Activated CD4-positive, alpha-beta memory T cell treated with anti-CD3 and anti-CD28 coated beads, Interleukin-2, amount 10 ng/mL, durations not matched to agents 7 days and 5 days (primary cell): ENCODE measurements at regions of chr13 and their contacts with region 1.

Region 1: DNA sequence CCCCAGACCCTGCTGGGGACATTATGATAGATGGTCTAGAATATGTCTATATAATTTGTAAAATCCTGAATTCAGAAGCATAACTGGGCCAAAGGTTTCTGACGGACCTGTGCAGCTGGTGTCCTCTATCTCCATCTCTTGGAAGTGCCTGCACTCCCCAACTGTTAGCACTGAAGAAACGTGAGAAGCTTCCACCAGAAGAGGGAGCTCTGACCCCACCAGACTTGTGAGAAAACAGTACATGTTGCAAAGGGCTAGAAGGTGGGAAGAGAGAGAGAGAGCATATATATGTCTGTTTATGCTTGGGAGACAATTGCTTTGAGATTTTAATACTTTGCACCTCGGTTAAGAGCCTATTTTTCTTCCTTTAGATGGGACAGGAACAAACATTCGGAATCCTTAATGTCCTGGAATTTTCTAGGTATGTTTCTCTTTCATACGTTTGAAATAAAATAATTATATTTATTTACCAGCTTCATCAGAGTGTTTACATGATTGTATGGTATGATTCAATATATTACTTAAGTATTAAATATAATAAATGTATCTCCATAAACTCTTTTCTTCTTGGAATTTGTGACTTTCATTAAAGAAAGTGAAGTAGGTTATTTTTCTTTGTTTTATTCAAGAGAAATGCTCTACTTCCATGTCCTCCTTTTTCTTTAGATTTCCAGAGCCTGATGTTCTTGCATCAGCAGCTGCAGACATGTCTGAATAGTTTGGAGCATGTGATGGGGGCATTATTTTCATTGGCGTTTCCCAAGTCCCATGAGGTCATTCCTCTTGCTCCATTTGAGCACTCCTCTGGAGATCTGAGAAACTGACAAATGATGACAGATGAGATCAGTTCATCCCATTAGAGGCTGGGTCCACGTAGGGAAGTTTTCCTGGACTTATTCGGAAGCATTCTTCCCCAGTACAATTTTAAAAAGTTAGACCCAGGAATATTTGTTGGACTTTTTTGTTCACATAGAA is 202.9 kb downstream of the ATP8A2 start:
- DNase-seq: peak; percentile 76
- H3K4me3 Mint-ChIP-seq: no peak overlapping the region
- H3K27ac Mint-ChIP-seq: no peak overlapping the region
- H3K4me1 Mint-ChIP-seq: peaks cover 6% of the 10 kb centered on the region
- H3K27me3 Mint-ChIP-seq: peaks cover 38% of the 10 kb centered on the region

Region 2: DNA sequence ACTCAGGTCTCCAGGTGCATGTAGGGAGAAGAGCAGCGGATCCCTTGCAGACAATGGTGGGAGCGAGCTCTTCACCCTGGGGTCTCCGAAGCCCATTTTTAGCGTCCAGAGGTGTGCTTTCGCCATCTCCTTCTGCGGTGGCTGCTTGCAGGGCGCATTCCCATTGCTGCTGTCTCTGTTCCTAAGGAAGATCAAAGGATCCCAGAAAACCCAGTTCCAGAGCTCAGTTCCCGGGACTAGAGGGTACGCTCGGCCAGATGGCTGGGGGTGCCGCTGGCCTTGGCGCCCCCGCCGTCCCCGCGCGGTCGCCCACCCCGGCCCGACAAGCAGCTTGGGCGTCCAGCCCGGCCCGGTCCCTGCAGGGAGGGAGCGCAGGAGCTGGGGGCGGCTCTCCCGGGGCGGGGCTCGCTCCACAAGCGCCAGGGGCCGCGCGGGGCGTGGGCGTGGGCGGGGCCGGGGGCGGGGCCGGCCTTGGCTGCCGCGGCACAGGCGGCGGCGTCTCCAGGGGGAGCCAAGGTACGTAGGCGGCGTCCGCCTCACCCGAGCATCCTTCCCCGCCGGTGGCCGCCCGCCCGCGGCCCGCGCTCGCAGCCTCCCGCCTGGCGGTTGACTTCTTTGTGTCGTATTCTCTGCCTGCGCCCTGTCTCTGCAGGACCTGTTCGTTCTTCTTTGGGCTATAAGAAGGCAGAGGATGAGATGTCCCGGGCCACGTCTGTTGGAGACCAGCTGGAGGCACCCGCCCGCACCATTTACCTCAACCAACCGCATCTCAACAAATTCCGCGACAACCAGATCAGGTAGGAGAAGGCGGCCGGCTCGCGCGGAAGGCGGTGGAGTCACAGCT is 106.2 kb before region 1 on chr13:
- CTCF ChIA-PET with region 1: no interaction called
- POLR2A ChIA-PET with region 1: no interaction called
- DNase-seq: peak; percentile 18
- H3K4me3 Mint-ChIP-seq: no peak overlapping the region
- H3K27ac Mint-ChIP-seq: no peak overlapping the region
- H3K4me1 Mint-ChIP-seq: peaks cover 2% of the 10 kb centered on the region
- H3K27me3 Mint-ChIP-seq: peaks cover 39% of the 10 kb centered on the region

Region 3: GRCh38 chr13:25561812-25562211 is 12.9 kb before region 1 on chr13:
- CTCF ChIA-PET with region 1: no interaction called
- POLR2A ChIA-PET with region 1: no interaction called
- DNase-seq: no peak
- H3K4me3 Mint-ChIP-seq: no peak overlapping the region
- H3K27ac Mint-ChIP-seq: no peak overlapping the region
- H3K4me1 Mint-ChIP-seq: no peaks in the 10 kb centered on the region
- H3K27me3 Mint-ChIP-seq: peaks cover 20% of the 10 kb centered on the region

Region 4: DNA sequence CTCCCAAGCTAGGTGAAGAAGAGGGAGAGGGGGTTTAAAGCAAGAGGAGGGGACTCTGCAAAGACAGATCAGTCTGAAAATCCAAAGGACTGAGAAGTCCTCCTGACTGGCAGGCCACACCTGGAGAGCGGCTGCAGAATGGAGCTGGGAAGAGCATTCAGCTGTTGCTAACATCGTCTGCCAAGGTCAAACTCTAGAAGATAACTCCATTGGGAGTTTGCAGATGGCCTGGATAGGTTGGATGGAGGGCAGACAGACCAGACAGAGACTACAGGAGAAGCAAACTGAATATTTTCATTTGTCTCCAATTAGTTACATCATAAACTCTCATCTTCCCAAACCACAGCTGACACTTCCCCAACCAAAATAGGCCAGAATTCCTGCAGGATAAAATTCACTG is 497.0 kb after region 1 on chr13:
- CTCF ChIA-PET with region 1: interaction called, 10 read pairs
- POLR2A ChIA-PET with region 1: no interaction called
- DNase-seq: no peak
- H3K4me3 Mint-ChIP-seq: no peak overlapping the region
- H3K27ac Mint-ChIP-seq: no peak overlapping the region
- H3K4me1 Mint-ChIP-seq: no peaks in the 10 kb centered on the region
- H3K27me3 Mint-ChIP-seq: peaks cover 27% of the 10 kb centered on the region